ENCODE measurements at regions of chr2 and their contacts with region 1.

Region 1: DNA sequence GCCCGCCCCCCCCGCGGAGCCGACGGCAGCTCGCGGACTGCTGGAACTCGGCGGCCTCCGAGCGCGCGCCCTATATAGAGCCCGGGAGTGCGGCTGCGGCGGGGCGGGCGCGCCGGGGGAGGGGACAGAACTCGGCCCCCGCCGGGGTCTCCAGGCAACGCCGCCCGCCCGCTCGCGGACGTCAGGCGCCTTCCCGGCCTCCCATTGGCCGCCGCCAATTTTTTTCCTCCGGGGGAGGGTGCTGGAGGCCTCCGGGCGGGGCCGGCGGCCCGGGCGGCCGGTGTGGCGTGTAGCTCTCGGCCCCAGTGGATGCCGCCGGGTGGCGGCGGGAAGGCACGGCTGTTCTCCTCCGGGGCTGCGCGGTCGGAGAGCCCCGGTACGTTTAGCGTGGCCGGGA is at the start of gene ZFP36L2:
- DNase-seq: peak; percentile 96 to 97
- ATAC-seq: peak; percentile 58 to 78
- H3K4me3 ChIP-seq: peak within 1 kb of the TSS; percentile 86
- H3K27ac ChIP-seq: peak within 1 kb of the TSS; percentile 89 to 98
- H3K4me1 ChIP-seq: peaks cover 40% of the 10 kb centered on the region
- CTCF ChIP-seq: no peak
- EP300 ChIP-seq: no peak
- POLR2A ChIP-seq: peak; percentile 84
- RAD21 ChIP-seq: no peak; a peak in 1 of 5 replicates
- polyA plus RNA-seq, gene ZFP36L2: 10.5 and 14.9 TPM in 2 replicates

Region 2: DNA sequence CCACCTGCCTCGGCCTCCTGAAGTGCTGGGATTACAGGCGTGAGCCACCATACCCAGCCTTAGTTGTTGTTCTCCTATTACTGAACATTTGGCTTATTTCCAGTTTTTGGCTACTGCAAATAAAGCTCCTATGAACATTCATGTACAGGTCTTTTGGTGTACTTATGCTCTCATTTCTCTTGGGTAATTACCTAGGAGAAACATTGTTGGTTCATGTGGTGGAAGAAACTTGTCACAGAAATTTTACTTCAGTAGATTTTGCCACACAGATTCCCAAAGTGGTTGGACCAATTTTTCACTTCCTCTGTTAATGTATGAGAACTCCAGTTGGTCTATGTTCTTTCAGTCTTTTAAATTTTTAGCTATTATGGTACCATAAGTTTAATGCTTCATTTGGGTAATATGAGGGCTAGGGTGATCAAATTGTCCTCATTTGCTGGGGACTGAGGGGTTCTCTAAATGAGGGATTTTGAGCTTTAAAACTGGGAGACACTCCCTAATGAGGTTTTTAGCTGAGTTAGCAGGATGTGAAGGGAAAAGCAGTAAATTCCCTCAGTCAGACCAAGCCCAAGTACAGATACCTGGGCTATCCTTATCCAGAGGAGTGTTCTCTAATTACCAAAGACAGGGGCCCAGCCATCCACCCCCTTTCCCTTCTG is 624.2 kb before region 1 on chr2:
- CTCF ChIA-PET with region 1: no interaction called
- POLR2A ChIA-PET with region 1: no interaction called
- DNase-seq: no peak
- ATAC-seq: no peak; a peak in 1 of 6 replicates
- H3K4me3 ChIP-seq: no peak overlapping the region
- H3K27ac ChIP-seq: no peak overlapping the region
- H3K4me1 ChIP-seq: peaks cover 9% of the 10 kb centered on the region; the same call in 2 of the 3 replicates
- CTCF ChIP-seq: no peak
- EP300 ChIP-seq: no peak
- POLR2A ChIP-seq: no peak
- RAD21 ChIP-seq: no peak

Region 3: DNA sequence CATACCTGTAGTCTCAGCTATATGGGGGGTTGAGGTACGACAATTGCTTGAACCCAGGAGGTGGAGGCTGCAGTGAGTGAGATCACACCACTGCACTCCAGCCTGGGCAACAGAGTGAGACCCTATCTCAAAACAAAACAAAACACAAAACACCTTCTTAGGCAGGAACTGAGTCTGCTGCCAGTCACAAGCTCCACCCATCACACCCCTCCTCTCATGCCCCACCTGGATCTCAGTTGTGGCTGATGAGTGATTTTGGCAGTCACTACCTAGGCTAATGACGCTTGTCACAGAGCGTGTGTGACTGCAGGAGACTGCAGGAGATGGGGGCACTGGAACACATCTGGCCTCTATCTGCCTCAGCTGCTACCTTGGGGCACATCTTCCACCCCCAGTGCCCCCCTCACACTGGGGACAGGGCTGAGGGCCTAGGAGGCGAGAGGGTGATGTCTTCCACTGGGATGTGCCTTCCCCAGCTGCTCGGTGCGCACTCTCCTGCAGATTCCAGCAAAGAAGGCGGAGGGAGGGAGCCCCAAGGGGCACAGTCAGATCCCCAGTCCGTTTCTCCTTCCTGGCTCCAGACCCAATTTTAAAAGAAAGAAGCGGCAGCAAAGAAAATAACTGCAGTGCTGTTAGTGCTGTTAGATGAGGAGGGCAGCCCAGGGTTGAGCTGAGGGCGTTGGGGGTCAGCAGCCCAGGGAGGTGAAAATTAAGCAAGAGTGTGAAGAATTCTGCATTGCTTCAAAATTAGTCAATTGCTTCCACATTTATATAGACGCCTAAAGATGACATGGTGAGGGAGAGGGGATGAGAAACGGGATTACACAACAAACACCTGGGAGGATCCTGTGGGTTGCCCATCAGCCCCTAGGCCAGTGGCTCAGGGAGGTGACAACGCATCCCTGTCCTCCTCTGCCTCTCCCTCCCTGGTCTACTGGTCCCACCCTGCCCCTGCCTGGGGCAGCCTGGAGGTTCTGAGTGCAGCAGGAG is 290.6 kb before region 1 on chr2:
- CTCF ChIA-PET with region 1: interaction called, 166 read pairs
- POLR2A ChIA-PET with region 1: interaction called, 3 read pairs
- DNase-seq: no peak
- ATAC-seq: no peak
- H3K4me3 ChIP-seq: no peak overlapping the region
- H3K27ac ChIP-seq: no peak overlapping the region
- H3K4me1 ChIP-seq: 0 out of 3 replicates have a peak, but pooled peaks cover 2% of the 10 kb centered on the region
- CTCF ChIP-seq: no peak
- EP300 ChIP-seq: no peak
- POLR2A ChIP-seq: no peak
- RAD21 ChIP-seq: no peak

Region 4: DNA sequence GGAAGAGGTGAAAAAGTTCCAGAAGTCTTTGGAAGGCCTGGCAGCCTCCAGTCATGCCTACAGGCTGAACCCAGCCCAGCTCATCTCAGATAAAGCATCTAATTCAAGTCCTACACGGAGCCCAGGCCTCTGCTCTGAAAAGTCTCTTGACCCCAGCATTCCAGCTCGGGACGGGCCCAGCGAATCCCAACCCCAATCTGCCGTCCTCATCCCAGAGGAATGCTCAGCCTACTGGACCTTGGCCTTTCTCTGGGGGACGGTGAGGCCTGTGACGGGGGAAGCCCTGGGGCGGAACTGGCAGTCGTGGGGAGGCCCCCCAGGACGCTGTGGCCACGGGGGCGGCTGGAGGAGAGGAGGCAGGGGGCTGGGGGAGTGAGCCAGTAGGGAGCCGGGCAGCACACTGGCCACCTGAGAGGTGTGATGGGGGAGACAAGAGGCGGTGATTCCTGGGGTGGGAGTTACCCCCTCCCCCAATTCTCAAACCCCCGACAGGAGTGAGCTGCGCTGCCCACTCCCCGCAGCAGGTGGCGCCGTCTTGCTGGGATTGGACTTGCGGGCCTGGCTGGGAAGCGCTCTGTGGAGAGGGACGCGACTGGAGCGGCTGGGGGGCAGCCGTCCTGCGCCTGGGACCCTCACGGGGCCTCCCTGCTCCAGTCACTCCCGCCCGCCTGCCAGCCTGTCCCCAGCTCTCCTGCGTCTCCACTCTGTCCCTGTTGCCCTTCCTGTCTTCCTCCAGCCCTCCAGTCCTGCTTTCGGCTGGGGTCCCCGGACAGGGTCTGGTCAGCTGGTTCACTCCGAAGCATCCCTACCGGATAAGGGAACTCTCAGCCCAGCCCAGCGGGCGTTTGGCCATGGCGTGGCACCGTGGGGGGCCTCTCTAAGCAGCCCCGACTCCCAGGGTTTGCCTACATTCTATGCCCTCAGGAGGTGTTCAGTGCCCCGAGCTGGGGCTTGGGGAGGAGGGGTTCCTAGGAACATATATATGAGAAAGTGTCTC is 251.5 kb before region 1 on chr2:
- CTCF ChIA-PET with region 1: interaction called, 253 read pairs
- POLR2A ChIA-PET with region 1: interaction called, 15 read pairs
- DNase-seq: peak; percentile 58 to 64
- ATAC-seq: peak; percentile 60 to 86
- H3K4me3 ChIP-seq: peak overlapping the region; percentile 31
- H3K27ac ChIP-seq: peak overlapping the region; percentile 73 to 87
- H3K4me1 ChIP-seq: peaks cover 37% of the 10 kb centered on the region
- CTCF ChIP-seq: peak; percentile 94
- EP300 ChIP-seq: no peak
- POLR2A ChIP-seq: no peak
- RAD21 ChIP-seq: peak; percentile 99

Region 5: DNA sequence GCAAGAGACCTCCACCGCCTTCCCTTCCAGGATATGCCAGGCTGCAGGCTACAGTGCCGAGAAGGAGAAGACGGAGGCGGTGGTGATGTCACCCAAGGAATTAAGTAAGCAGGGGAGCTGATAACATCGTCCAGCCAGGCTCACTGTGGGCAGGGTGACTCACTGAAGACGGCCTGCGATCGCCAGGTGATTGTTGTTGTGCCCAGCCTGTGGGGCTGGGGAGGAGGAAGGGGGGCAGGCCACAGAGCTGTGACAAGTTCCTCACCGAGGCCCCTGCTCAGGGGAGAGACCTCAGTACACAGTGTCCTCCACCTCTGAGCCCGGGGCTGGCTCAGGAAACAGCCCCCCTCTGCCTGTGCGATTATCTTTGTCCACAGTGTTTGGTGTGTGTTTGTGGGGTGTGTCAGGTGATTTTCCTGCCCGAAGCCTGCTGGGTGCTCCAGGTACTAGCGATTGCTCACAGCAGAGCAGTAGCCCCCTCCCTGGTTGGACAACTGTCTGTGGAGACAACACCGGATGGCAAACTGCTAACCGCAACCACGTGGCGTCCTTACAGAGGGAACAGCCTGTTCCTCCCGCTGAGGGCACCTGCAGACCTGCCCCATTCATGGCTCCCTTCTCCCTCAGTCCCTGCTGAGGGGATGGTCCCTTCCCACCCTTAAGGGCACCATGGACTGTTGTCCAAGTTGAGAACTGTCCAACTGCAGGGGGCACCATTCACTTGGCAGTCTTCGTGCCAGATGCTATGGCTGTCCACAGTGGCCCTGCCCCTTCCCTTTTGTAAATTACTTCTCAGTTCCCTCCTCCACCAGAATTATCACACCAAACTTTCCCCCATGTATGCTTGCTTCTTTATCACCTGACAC is 95.3 kb before region 1 on chr2:
- CTCF ChIA-PET with region 1: interaction called, 84 read pairs
- POLR2A ChIA-PET with region 1: interaction called, 16 read pairs
- DNase-seq: peak; percentile 87 to 96
- ATAC-seq: peak; percentile 86 to 87
- H3K4me3 ChIP-seq: no peak overlapping the region
- H3K27ac ChIP-seq: peak overlapping the region; percentile 75 to 86
- H3K4me1 ChIP-seq: peaks cover 31% of the 10 kb centered on the region
- CTCF ChIP-seq: peak; percentile 89
- EP300 ChIP-seq: peak in 1 of 2 experiments; percentile 12; a peak in 1 of 5 replicates
- POLR2A ChIP-seq: no peak
- RAD21 ChIP-seq: peak; percentile 94 to 96

Region 6: GRCh38 chr2:43207553-43208293 is 18.8 kb before region 1 on chr2:
- CTCF ChIA-PET with region 1: interaction called, 12 read pairs
- POLR2A ChIA-PET with region 1: no interaction called
- DNase-seq: no peak
- ATAC-seq: peak; percentile 40 to 74; a peak in 5 of 6 replicates
- H3K4me3 ChIP-seq: no peak overlapping the region
- H3K27ac ChIP-seq: peak overlapping the region in 1 of 2 experiments; percentile 55; a peak in 2 of 6 replicates
- H3K4me1 ChIP-seq: peaks cover 13% of the 10 kb centered on the region
- CTCF ChIP-seq: no peak
- EP300 ChIP-seq: no peak
- POLR2A ChIP-seq: no peak
- RAD21 ChIP-seq: no peak

Region 7: GRCh38 chr2:43358410-43359201 is 132.1 kb after region 1 on chr2:
- CTCF ChIA-PET with region 1: no interaction called
- POLR2A ChIA-PET with region 1: no interaction called
- DNase-seq: no peak
- ATAC-seq: no peak
- H3K4me3 ChIP-seq: no peak overlapping the region
- H3K27ac ChIP-seq: peak overlapping the region in 1 of 2 experiments; percentile 11; a peak in 1 of 6 replicates
- H3K4me1 ChIP-seq: peaks cover 14% of the 10 kb centered on the region; the same call in 2 of the 3 replicates
- CTCF ChIP-seq: no peak
- EP300 ChIP-seq: no peak
- POLR2A ChIP-seq: no peak
- RAD21 ChIP-seq: no peak

Region 8: DNA sequence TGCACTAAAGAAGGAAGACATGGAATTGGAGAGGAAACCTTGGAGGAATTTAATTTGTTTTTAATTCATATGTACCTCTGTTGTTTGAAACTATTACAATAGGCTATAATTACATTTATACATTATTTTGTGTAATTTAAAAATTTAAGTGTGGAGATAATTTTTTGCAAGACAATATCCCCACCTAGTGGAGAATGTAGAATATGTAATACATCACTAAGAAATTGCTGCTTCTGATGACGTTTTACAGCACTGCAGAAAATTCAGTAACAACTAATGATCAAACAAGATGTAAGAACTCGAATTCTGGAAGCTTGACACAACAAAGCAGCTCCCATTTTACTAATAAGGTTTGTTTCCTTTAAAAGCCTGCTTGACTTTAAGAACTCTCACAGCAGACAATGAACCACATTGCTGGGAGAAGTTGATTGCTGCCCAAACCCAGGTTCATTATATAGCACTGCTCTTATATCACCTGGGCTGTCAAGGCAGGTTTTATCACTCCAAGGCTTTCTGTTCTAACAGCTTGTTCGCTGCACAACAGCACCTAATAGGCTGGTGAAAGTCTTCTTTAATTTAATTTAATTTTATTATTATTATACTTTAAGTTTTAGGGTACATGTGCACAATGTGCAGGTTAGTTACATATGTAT is 315.9 kb after region 1 on chr2:
- CTCF ChIA-PET with region 1: interaction called, 29 read pairs
- POLR2A ChIA-PET with region 1: no interaction called
- DNase-seq: peak; percentile 28 to 55
- ATAC-seq: peak; percentile 56 to 71; a peak in 3 of 6 replicates
- H3K4me3 ChIP-seq: no peak overlapping the region
- H3K27ac ChIP-seq: peak overlapping the region in 1 of 2 experiments; percentile 63; a peak in 1 of 6 replicates
- H3K4me1 ChIP-seq: peaks cover 29% of the 10 kb centered on the region
- CTCF ChIP-seq: peak; percentile 81
- EP300 ChIP-seq: no peak
- POLR2A ChIP-seq: no peak
- RAD21 ChIP-seq: peak; percentile 77 to 86

Measured in A549 (cell line).